Endothelial cell of umbilical vein (primary cell): ENCODE measurements at regions of chr1 and their contacts with region 1.

Region 1: DNA sequence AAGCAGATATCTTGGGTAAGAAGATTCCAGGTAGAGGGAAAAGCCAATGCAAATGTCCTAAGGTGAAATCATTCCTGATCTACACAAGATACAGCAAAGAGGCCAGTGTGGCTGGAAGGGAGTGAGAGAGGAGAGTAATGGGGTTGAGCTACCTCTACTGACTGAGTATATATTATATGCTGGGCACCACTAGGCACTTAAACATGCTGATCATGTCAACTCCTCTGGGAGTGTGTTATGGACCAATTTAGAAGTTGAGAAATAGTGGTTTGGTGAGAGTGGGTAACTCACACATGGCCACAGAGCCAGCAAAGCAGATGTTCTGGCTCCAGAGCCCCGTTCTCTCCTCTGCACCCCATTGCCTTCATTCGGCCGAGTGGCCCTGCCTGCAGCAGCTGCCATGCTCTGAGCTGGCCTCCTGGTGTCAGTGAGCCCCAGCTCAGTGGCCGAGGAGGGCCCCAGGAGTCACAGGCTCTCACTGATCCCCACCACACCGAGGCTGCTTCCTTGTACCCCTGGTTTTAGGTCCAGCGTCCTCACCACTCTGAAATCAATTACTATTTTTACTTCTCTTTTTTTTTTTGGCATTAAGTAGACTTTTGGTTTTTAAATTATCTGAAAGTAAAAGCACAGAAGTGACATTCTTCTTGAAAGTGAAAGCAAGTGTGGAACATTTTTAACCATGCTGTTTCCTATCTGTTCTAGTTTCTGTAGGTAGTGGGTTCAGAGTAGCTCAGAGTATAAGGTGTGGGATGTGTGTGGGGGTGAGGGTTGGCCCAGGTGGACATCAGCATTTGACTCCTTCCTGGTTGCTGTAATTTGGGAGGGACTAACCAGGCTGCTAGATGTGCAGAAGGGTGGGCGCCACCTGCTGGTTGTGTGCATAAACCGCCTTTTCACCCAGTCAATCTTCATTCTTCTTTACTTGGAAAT is 45.8 kb upstream of the CRNN start:
- DNase-seq: peak; percentile 63
- H3K4me3 ChIP-seq: no peak overlapping the region
- H3K27ac ChIP-seq: no peak overlapping the region
- H3K4me1 ChIP-seq: no peaks in the 10 kb centered on the region
- H3K27me3 ChIP-seq: peaks cover 0 to 4% of the 10 kb centered on the region in 2 experiments
- CTCF ChIP-seq: peak; percentile 88 to 91
- POLR2A ChIP-seq: no peak

Region 2: GRCh38 chr1:151547119-151547899 is 912.6 kb before region 1 on chr1:
- CTCF ChIA-PET with region 1: no interaction called
- POLR2A ChIA-PET with region 1: no interaction called
- dilution Hi-C with region 1: no loop called
- intact Hi-C with region 1: no loop called
- DNase-seq: peak; percentile 60
- H3K4me3 ChIP-seq: no peak overlapping the region
- H3K27ac ChIP-seq: no peak overlapping the region
- H3K4me1 ChIP-seq: peaks cover 11% of the 10 kb centered on the region
- H3K27me3 ChIP-seq: no peaks in the 10 kb centered on the region
- CTCF ChIP-seq: no peak
- POLR2A ChIP-seq: no peak

Region 3: GRCh38 chr1:152047730-152048402 is 412.0 kb before region 1 on chr1:
- CTCF ChIA-PET with region 1: interaction called, 58 read pairs
- POLR2A ChIA-PET with region 1: no interaction called
- dilution Hi-C with region 1: no loop called
- intact Hi-C with region 1: loop called (anchors 1 kb)
- DNase-seq: peak; percentile 91
- H3K4me3 ChIP-seq: no peak overlapping the region
- H3K27ac ChIP-seq: peak overlapping the region; percentile 25
- H3K4me1 ChIP-seq: peaks cover 18% of the 10 kb centered on the region
- H3K27me3 ChIP-seq: peaks cover 7 to 27% of the 10 kb centered on the region in 2 experiments
- CTCF ChIP-seq: peak; percentile 61 to 80
- POLR2A ChIP-seq: no peak

Region 4: DNA sequence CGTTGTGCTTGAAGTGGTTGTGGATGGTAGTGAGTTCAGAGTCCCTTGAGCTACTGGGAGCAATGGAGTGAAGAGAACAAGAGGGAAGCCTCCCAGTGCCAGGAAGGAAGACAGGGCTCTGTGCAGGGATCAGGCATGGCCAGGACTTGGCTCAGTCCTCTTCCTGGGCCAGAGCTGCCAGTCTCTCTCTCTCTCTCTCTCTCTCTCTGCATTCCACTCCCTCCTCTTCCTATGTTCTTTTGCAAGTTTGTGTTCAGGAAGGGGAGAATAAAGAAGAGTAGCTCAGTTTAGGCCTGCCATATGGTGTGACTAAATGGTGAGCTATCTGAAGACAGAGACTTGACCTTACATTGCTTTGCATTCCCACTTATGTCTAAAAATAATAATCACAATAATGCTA is 280.3 kb before region 1 on chr1:
- CTCF ChIA-PET with region 1: interaction called, 296 read pairs
- POLR2A ChIA-PET with region 1: no interaction called
- dilution Hi-C with region 1: no loop called
- intact Hi-C with region 1: no loop called
- DNase-seq: no peak
- H3K4me3 ChIP-seq: no peak overlapping the region
- H3K27ac ChIP-seq: no peak overlapping the region
- H3K4me1 ChIP-seq: peaks cover 4% of the 10 kb centered on the region
- H3K27me3 ChIP-seq: peaks cover 0 to 3% of the 10 kb centered on the region in 2 experiments
- CTCF ChIP-seq: no peak
- POLR2A ChIP-seq: no peak

Region 5: DNA sequence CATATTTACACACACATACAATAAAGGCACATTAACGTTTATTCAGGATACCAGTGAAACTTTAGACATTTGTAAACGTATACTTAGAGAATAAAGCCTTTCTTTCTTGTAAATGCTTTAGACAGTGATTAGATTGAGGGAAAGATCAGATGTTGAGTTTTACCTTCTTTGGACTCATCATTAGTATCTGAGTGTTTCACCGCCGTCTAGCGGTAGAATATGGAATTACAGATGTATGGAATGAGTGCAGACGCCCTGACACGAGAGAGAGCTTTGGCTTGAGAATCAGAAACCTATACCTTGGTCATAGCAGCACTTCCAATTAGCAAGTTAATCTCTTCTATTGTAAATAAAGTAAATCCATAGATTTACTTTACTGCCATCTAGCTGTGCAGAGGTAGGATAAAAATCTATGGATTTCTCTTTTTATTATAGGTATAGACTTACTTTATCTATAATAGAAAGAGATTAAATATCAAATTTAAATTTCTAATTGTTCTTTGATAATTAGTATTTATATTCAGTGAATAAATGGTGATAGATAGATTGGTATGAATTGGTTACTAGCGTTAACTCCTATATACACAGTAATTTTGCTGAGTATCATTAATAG is 112.6 kb before region 1 on chr1:
- CTCF ChIA-PET with region 1: interaction called, 68 read pairs
- POLR2A ChIA-PET with region 1: no interaction called
- dilution Hi-C with region 1: no loop called
- intact Hi-C with region 1: loop called (anchors 1 kb)
- DNase-seq: peak; percentile 63
- H3K4me3 ChIP-seq: no peak overlapping the region
- H3K27ac ChIP-seq: no peak overlapping the region
- H3K4me1 ChIP-seq: no peaks in the 10 kb centered on the region
- H3K27me3 ChIP-seq: peaks cover 0 to 1% of the 10 kb centered on the region in 2 experiments
- CTCF ChIP-seq: peak; percentile 68 to 72
- POLR2A ChIP-seq: no peak

Region 6: GRCh38 chr1:152426731-152427130 is 33.1 kb before region 1 on chr1:
- CTCF ChIA-PET with region 1: interaction called, 15 read pairs
- POLR2A ChIA-PET with region 1: no interaction called
- dilution Hi-C with region 1: no loop called
- intact Hi-C with region 1: no loop called
- DNase-seq: no peak
- H3K4me3 ChIP-seq: no peak overlapping the region
- H3K27ac ChIP-seq: no peak overlapping the region
- H3K4me1 ChIP-seq: no peaks in the 10 kb centered on the region
- H3K27me3 ChIP-seq: no peaks in the 10 kb centered on the region
- CTCF ChIP-seq: no peak
- POLR2A ChIP-seq: no peak

Region 7: DNA sequence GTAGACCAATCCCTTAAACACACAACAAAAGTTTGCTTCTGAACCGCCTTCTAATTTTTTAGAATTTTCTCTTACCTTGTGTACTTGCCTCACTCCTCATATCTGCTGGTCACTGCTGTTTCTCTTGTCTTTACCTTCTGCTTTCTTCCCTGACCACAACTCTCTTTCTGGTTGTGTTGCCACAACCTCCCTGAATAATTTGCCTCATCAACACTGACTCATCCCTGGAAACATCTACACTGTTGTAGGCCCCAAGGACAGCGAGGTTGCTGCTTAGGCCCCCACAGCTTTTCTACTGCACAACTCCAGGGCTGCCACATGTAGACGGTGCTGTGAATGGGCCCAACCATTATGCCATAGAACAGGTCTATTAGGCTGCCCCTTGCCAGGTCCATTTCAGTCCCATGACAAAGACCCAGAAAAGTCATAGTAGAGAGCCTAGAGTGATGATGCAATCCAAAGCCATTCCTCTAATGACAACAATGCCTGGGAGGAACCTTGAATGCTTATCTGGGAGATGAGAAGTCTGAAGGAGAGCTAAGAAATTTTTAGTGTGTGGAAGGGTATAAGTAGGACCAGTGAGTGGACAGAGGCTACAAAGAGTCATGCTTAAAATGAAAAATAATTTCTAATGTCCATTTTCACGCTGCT is 14.2 kb after region 1 on chr1:
- CTCF ChIA-PET with region 1: interaction called, 24 read pairs
- POLR2A ChIA-PET with region 1: no interaction called
- dilution Hi-C with region 1: no loop called
- intact Hi-C with region 1: no loop called
- DNase-seq: no peak
- H3K4me3 ChIP-seq: no peak overlapping the region
- H3K27ac ChIP-seq: no peak overlapping the region
- H3K4me1 ChIP-seq: no peaks in the 10 kb centered on the region
- H3K27me3 ChIP-seq: no peaks in the 10 kb centered on the region
- CTCF ChIP-seq: no peak
- POLR2A ChIP-seq: no peak

Region 8: DNA sequence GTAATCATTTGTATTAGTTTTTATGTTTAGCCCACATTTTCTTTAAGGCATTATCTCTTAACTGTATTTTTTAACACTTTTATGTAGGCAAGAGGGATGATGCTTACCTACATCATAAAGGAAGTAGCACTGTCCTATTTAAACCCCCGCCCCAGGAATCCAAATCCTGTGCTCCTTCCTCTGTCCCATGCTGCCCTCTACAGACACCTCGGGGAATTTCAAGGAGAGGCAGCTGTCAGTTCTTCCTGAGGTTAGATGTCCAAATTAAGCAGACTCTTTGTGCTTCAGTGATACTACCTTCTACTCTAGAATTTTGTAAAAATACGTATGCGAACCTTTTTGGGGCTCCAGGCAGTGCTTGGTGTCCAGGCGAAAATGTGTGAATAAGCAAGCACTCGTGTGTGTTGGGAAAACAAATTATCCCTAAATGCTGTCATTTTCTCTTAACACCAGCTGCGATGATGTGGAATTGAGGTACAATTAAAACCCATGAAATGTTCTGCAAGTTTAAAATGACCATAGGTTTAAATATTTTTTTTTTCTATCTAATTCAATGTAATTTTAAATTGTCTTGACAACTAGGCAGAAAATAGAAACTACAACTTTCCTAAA is 73.6 kb after region 1 on chr1:
- CTCF ChIA-PET with region 1: interaction called, 10 read pairs
- POLR2A ChIA-PET with region 1: no interaction called
- dilution Hi-C with region 1: no loop called
- intact Hi-C with region 1: no loop called
- DNase-seq: peak; percentile 36
- H3K4me3 ChIP-seq: no peak overlapping the region
- H3K27ac ChIP-seq: no peak overlapping the region
- H3K4me1 ChIP-seq: no peaks in the 10 kb centered on the region
- H3K27me3 ChIP-seq: no peaks in the 10 kb centered on the region
- CTCF ChIP-seq: peak; percentile 51 to 62
- POLR2A ChIP-seq: no peak